Activated CD4-positive, alpha-beta memory T cell treated with anti-CD3 and anti-CD28 coated beads, Interleukin-2, amount 10 ng/mL, durations not matched to agents 7 days and 5 days (primary cell): ENCODE measurements at regions of chr3 and their contacts with region 1.

Region 1: GRCh38 chr3:56812754-56813650 is 11.3 kb upstream of the ARHGEF3 start:
- DNase-seq: no peak
- H3K4me3 Mint-ChIP-seq: no peak overlapping the region
- H3K27ac Mint-ChIP-seq: peak overlapping the region; percentile 17
- H3K4me1 Mint-ChIP-seq: peaks cover 35% of the 10 kb centered on the region
- H3K27me3 Mint-ChIP-seq: no peaks in the 10 kb centered on the region

Region 2: DNA sequence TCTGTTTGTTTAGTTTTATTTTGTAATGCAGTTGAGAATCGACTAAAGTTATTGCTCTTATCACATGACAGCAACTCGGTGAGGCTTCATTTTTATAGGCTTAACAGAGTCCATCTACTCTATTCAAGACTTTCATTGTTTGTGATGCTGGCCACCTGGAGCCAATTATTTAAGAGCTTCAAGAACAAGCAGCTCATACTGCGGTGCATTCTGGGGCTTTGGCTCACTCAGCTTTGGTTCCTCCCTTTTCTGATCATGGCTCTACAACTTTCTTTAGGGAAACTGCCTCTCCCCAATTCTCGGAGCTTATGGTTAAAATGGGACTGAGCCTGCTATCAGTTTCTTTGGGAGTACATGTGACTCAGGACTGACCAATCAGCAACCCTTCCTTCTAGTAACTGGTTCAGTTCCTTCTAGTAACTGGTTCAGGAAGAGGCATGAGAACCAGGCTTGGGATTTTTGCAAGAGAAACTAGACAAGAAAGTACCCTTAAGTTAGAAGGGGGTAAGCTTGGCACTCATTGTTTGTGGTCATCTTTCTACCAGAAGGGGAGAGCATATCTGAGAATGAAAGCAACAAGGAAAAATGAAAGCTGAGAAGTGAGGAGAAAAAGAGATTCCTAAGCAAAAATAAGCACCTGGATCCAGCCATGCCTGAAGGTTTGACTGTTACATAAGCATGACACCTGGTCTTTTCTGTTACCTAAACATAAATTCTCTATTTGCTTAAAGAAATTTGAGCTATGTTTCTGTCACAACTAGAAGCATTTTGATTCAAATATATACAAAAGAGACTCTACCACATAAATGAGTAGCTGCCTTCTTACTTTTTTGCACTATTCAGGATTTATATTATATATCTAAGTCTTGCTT is 12.8 kb after region 1 on chr3:
- CTCF ChIA-PET with region 1: interaction called, 5 read pairs
- POLR2A ChIA-PET with region 1: interaction called, 13 read pairs
- DNase-seq: no peak
- H3K4me3 Mint-ChIP-seq: no peak overlapping the region
- H3K27ac Mint-ChIP-seq: no peak overlapping the region
- H3K4me1 Mint-ChIP-seq: peaks cover 32% of the 10 kb centered on the region
- H3K27me3 Mint-ChIP-seq: no peaks in the 10 kb centered on the region

Region 3: DNA sequence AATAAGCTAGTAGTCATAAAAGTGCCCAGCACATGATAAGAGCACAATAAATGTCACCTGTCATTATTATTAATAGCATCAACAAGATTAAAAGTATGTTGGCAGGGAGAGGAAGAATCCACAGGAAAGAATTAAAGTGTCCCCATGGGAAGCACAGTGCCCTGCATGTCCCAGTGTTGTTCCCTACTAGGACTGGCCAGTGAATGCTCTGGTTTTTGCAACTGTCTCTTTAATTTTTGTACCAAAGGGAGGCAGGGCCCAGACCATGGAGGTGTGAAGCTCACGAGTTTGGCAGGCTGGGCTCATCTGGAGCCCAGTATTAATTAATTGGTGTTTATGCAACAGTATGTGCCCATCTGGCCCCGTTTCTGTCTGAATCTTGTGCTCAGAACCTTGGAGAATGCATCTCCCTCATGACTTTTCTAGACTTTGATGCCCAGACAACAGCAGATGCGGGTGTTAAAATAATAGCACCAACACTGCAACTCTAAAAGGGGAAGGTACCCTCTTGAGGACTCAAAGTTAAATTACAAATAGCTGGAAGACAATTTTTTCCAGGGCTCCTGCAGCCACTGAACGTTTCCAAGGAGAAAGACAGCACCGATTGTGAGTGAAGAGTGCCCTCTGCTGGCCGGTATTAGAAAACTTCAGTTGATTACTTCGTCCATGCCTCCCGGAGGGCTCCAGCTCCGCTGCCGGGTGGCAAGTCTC is 175.6 kb after region 1 on chr3:
- CTCF ChIA-PET with region 1: interaction called, 14 read pairs
- POLR2A ChIA-PET with region 1: no interaction called
- DNase-seq: peak; percentile 69
- H3K4me3 Mint-ChIP-seq: no peak overlapping the region
- H3K27ac Mint-ChIP-seq: no peak overlapping the region
- H3K4me1 Mint-ChIP-seq: peaks cover 14% of the 10 kb centered on the region
- H3K27me3 Mint-ChIP-seq: peaks cover 16% of the 10 kb centered on the region